K562 (cell line): ENCODE measurements at regions of chr4 and their contacts with region 1.

Region 1: GRCh38 chr4:38078590-38079421 is 118.6 kb downstream of the PTTG2 start:
- DNase-seq: no peak
- ATAC-seq: no peak
- H3K4me3 ChIP-seq: no peak overlapping the region
- H3K27ac ChIP-seq: no peak overlapping the region
- H3K4me1 ChIP-seq: peaks cover 0 to 15% of the 10 kb centered on the region in 2 experiments; a peak in 4 of 5 replicates
- H3K27me3 ChIP-seq: no peaks in the 10 kb centered on the region; a peak in 2 of 5 replicates
- CTCF ChIP-seq: no peak
- EP300 ChIP-seq: no peak
- POLR2A ChIP-seq: no peak
- RAD21 ChIP-seq: no peak

Region 2: GRCh38 chr4:38013461-38014366 is 65.1 kb before region 1 on chr4:
- CTCF ChIA-PET with region 1: no interaction called
- POLR2A ChIA-PET with region 1: no interaction called
- in situ Hi-C with region 1: no loop called
- intact Hi-C with region 1: no loop called
- DNase-seq: no peak
- ATAC-seq: no peak
- H3K4me3 ChIP-seq: no peak overlapping the region
- H3K27ac ChIP-seq: no peak overlapping the region
- H3K4me1 ChIP-seq: no peaks in the 10 kb centered on the region
- H3K27me3 ChIP-seq: peaks cover 2 to 28% of the 10 kb centered on the region in 2 experiments; a peak in 4 of 5 replicates
- CTCF ChIP-seq: no peak
- EP300 ChIP-seq: no peak
- POLR2A ChIP-seq: no peak
- RAD21 ChIP-seq: no peak

Region 3: GRCh38 chr4:38174801-38175200 is 96.0 kb after region 1 on chr4:
- CTCF ChIA-PET with region 1: no interaction called
- POLR2A ChIA-PET with region 1: no interaction called
- in situ Hi-C with region 1: loop called (anchors 5 kb)
- intact Hi-C with region 1: no loop called
- DNase-seq: no peak
- ATAC-seq: no peak
- H3K4me3 ChIP-seq: no peak overlapping the region
- H3K27ac ChIP-seq: no peak overlapping the region
- H3K4me1 ChIP-seq: peaks cover 4 to 15% of the 10 kb centered on the region in 2 experiments
- H3K27me3 ChIP-seq: peaks cover 2 to 17% of the 10 kb centered on the region in 2 experiments; a peak in 4 of 5 replicates
- CTCF ChIP-seq: no peak
- EP300 ChIP-seq: no peak
- POLR2A ChIP-seq: no peak
- RAD21 ChIP-seq: no peak